Activated CD4-positive, alpha-beta T cell treated with anti-CD3 and anti-CD28 coated beads, Interleukin-2, amount 10 ng/mL, durations not matched to agents 24 days and 14 days (primary cell): ENCODE measurements at regions of chrX and their contacts with region 1.

Region 1: GRCh38 chrX:57121162-57121741 is at the start of gene SPIN2B:
- DNase-seq: peak; percentile 93
- H3K4me3 Mint-ChIP-seq: peak within 1 kb of the TSS; percentile 93
- H3K27ac Mint-ChIP-seq: peak within 1 kb of the TSS; percentile 90
- H3K4me1 Mint-ChIP-seq: peaks cover 8% of the 10 kb centered on the region
- H3K27me3 Mint-ChIP-seq: no peaks in the 10 kb centered on the region
- total RNA-seq, gene SPIN2B: 8.7 and 9.5 TPM in 2 replicates

Region 2: DNA sequence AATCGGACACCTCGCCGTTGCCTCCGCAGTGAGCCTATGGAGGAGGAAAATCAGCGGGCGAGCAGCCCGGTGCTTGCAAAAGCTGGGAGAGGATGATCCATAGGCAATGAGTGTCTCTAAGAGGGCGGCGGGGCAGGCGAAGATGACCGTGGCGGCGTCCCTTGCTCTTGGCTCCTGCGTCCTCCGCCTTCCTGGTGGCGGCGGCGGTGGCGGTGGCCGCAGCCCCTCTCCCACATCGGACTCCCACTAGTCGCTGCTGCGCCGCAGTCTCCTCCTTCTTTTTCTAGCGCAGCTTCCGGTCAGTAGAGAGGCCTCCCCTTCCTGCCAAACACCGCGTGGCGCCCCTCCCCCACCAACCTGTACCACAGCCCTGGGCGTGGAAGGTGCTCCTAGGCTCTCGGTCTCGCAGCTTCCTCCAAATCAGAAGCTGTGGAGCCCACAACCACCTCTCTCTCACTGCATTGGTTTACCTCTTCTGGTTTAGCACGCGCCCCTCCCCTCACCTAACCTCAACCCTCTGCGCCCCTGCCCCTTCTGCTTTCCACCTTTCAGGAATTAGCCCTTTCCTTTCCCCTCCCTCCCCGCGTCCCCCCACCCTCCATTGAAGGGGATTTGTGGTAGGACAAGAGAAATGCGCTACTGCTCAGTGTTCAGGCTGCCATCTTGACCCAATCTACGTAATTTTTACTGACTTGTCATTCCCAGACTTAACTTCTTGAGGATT is 125.8 kb before region 1 on chrX and contains the start of gene SPIN3:
- intact Hi-C with region 1: loop called (anchors 2 kb)
- DNase-seq: peak; percentile 86
- H3K4me3 Mint-ChIP-seq: peak within 1 kb of the TSS; percentile 87
- H3K27ac Mint-ChIP-seq: peak within 1 kb of the TSS; percentile 91
- H3K4me1 Mint-ChIP-seq: peaks cover 25% of the 10 kb centered on the region
- H3K27me3 Mint-ChIP-seq: no peaks in the 10 kb centered on the region
- total RNA-seq, gene SPIN3: 9.3 and 9.5 TPM in 2 replicates

Region 3: DNA sequence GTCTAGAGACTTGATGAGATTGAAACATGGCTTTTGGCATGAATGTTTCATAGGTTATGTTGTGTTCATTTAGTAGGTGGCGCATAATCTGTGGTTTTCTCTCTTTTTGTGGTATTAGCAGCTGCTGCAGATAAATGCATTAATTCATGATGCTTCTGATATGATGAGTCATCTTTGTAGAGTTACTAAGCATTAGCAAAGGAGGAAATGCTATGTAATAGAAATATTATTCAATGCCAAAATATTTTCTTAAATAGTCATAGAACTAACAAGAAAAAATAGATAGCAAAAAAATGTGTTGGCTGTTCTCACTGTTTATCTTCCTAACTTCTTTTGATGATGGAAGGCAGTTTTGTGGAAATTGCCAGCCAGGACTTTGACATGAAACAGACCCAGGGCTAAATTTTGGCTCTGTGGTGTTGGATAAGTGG is 474.1 kb after region 1 on chrX:
- intact Hi-C with region 1: loop called (anchors 10 kb)
- DNase-seq: no peak
- H3K4me3 Mint-ChIP-seq: peak overlapping the region; percentile 74
- H3K27ac Mint-ChIP-seq: no peak overlapping the region
- H3K4me1 Mint-ChIP-seq: peaks cover 19% of the 10 kb centered on the region
- H3K27me3 Mint-ChIP-seq: no peaks in the 10 kb centered on the region